Transverse colon (tissue), 4 donors: ENCODE measurements at regions of chr15 and their contacts with region 1.

Region 1: DNA sequence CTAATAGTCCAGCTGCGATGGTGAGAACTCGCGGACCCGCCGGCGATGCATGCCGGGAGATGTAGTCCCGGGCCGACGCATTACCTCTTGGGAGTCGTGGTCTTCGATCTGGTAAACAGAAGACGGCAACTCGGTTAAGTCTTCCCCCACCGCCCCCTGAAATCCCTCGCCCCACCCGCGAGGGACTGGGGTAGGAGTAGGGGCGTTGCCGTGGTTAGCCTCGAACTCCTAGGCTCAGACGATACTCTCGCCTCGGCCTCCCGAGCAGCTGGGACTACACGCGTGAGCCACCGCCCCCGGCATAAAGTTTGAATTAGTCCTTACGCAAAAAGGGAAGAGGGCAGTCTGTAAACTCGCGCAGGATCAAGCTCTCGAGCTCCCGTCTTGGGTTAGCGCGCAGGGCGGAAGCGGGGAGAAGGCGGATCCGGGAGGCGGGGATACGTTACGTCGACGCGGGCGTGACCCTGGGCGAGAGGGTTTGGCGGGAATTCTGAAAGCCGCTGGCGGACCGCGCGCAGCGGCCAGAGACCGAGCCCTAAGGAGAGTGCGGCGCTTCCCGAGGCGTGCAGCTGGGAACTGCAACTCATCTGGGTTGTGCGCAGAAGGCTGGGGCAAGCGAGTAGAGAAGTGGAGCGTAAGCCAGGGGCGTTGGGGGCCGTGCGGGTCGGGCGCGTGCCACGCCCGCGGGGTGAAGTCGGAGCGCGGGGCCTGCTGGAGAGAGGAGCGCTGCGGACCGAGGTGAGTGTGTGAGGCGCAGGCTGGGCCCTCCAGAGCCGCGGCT is at the start of gene RAD51:
- DNase-seq: peak; percentile 95
- H3K4me3 ChIP-seq: peak within 1 kb of the TSS; percentile 61 to 90 (median 74)
- H3K27ac ChIP-seq: peak within 1 kb of the TSS; percentile 96 to 100 (median 99)
- H3K4me1 ChIP-seq: peaks cover 6 to 24% (median 17%) of the 10 kb centered on the region in 4 donors
- H3K27me3 ChIP-seq: no peaks in the 10 kb centered on the region
- CTCF ChIP-seq: no peak
- EP300 ChIP-seq: no peak
- POLR2A ChIP-seq: peak; percentile 80
- total RNA-seq, gene RAD51: 1.1 to 31.6 (median 1.8) TPM

Region 2: DNA sequence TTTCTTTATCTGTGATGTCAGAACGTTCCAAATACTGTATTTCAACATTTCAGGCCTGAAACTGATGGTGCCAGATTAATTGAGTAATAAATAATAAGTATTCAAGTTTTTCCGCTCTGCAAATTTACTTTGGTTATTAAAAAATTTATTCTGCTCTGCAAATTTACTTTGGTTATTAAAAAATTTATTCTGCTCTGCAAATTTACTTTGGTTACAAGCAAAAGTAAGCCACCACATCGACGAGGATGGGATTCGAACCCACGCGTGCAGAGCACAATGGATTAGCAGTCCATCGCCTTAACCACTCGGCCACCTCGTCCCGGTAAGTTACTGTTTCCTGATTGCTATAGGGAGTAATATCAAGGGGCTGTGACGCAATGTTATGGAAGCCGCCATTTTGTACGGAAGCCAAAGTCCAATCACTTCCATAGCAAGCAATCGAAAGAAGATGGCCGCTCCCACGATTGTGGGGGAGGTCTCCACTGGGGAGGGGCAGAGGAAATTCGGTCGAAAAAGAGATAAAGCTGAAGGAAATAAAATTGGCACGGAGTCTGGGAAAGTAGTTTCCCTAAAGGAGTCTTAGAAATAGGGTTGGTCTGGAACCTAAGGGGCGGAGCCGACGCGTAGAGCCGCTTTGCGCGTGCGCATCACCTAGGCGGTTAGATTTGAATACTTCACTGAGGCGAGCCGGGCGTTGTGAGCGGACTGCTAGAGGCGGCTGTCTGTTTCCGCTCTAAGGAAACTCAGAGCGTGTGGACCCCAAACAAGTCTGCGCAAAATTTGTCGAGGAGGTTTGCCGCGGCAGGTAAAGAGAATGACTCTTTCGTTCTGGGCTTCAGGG is 101.1 kb before region 1 on chr15 and contains the start of gene KNL1:
- in situ Hi-C with region 1: loop called in 1 of 4 experiments (anchors 10 kb)
- intact Hi-C with region 1: no loop called
- DNase-seq: peak; percentile 94
- H3K4me3 ChIP-seq: peak within 1 kb of the TSS; percentile 34 to 61 (median 57)
- H3K27ac ChIP-seq: peak within 1 kb of the TSS; percentile 84 to 89 (median 88)
- H3K4me1 ChIP-seq: peaks cover 0 to 27% (median 7%) of the 10 kb centered on the region in 4 donors
- H3K27me3 ChIP-seq: no peaks in the 10 kb centered on the region
- CTCF ChIP-seq: no peak
- EP300 ChIP-seq: no peak
- POLR2A ChIP-seq: no peak
- total RNA-seq, gene KNL1: 3.4 to 7.6 (median 3.9) TPM

Region 3: GRCh38 chr15:40769274-40770146 is 74.6 kb after region 1 on chr15 and contains the start of gene C15orf62:
- in situ Hi-C with region 1: loop called in 1 of 4 experiments (anchors 10 kb)
- intact Hi-C with region 1: no loop called
- DNase-seq: peak; percentile 66
- H3K4me3 ChIP-seq: peak within 1 kb of the TSS in 1 of 4 donors; percentile 5
- H3K27ac ChIP-seq: peak within 1 kb of the TSS; percentile 77 to 88 (median 80)
- H3K4me1 ChIP-seq: peaks cover 19 to 52% (median 46%) of the 10 kb centered on the region in 4 donors
- H3K27me3 ChIP-seq: no peaks in the 10 kb centered on the region
- CTCF ChIP-seq: no peak
- EP300 ChIP-seq: no peak
- POLR2A ChIP-seq: no peak
- total RNA-seq, gene C15orf62: 0.14 to 0.32 TPM in 2 of 4 donors, not detected in the others

Region 4: GRCh38 chr15:40893733-40894688 is 199.1 kb after region 1 on chr15 and contains the start of gene VPS18:
- in situ Hi-C with region 1: loop called in 3 of 4 experiments (anchors 25 kb)
- intact Hi-C with region 1: no loop called
- DNase-seq: peak; percentile 99
- H3K4me3 ChIP-seq: peak within 1 kb of the TSS; percentile 70 to 89 (median 78)
- H3K27ac ChIP-seq: peak within 1 kb of the TSS; percentile 90 to 98 (median 92)
- H3K4me1 ChIP-seq: peaks cover 6 to 35% (median 21%) of the 10 kb centered on the region in 4 donors
- H3K27me3 ChIP-seq: no peaks in the 10 kb centered on the region
- CTCF ChIP-seq: peak; percentile 94 to 99 (median 98)
- EP300 ChIP-seq: peak; percentile 57
- POLR2A ChIP-seq: peak; percentile 86
- total RNA-seq, gene VPS18: 18.3 to 58.7 (median 21.0) TPM